CD4-positive, alpha-beta memory T cell (primary cell): ENCODE measurements at regions of chr15 and their contacts with region 1.

Region 1: GRCh38 chr15:98658831-98659699 is 10.7 kb downstream of the IGF1R start:
- DNase-seq: peak in 4 of 5 donors; percentile 27 to 40 (median 35)
- H3K4me3 ChIP-seq: no peak overlapping the region
- H3K4me3 Mint-ChIP-seq: no peak overlapping the region
- H3K27ac ChIP-seq: no peak overlapping the region
- H3K27ac Mint-ChIP-seq: no peak overlapping the region
- H3K4me1 ChIP-seq: peaks cover 3% of the 10 kb centered on the region
- H3K4me1 Mint-ChIP-seq: peaks cover 0 to 18% (median 10%) of the 10 kb centered on the region in 4 donors
- H3K27me3 ChIP-seq: no peaks in the 10 kb centered on the region
- H3K27me3 Mint-ChIP-seq: peaks cover 15 to 16% of the 10 kb centered on the region in 2 donors

Region 2: DNA sequence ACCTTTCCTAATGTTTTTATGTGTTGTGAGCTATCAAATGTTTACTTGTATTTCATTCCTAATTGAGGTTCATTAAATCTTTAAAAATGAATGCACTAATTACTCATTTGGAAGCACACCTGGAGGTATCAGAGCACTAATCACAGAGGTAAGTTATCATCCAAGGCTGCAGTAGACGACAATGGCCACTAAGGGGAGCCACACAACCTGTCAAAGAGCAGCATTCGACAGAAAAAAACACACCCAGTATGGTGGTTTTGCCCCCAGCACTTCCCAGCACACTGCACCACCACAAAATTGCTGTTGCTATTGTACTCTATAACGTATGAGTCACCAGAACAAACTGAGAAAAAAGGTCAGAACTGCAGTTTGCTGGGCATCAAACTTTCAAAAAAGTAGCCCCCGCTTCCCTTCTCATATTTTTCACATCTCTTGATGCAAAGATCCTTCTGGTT is 216.7 kb before region 1 on chr15:
- CTCF ChIA-PET with region 1: interaction called, 3 read pairs
- POLR2A ChIA-PET with region 1: no interaction called
- intact Hi-C with region 1: loop called (anchors 1 kb)
- DNase-seq: peak; percentile 12 to 43 (median 24)
- H3K4me3 ChIP-seq: no peak overlapping the region
- H3K4me3 Mint-ChIP-seq: no peak overlapping the region
- H3K27ac ChIP-seq: no peak overlapping the region
- H3K27ac Mint-ChIP-seq: no peak overlapping the region
- H3K4me1 ChIP-seq: no peaks in the 10 kb centered on the region
- H3K4me1 Mint-ChIP-seq: no peaks in the 10 kb centered on the region
- H3K27me3 ChIP-seq: no peaks in the 10 kb centered on the region
- H3K27me3 Mint-ChIP-seq: peaks cover 6 to 8% of the 10 kb centered on the region in 2 donors

Region 3: GRCh38 chr15:98518823-98519561 is 140.1 kb before region 1 on chr15:
- CTCF ChIA-PET with region 1: interaction called, 145 read pairs
- POLR2A ChIA-PET with region 1: interaction called, 3 read pairs
- intact Hi-C with region 1: loop called (anchors 1 kb)
- DNase-seq: peak in 4 of 5 donors; percentile 38 to 50 (median 42)
- H3K4me3 ChIP-seq: no peak overlapping the region
- H3K4me3 Mint-ChIP-seq: no peak overlapping the region
- H3K27ac ChIP-seq: no peak overlapping the region
- H3K27ac Mint-ChIP-seq: peak overlapping the region in 1 of 7 donors; percentile 23
- H3K4me1 ChIP-seq: no peaks in the 10 kb centered on the region
- H3K4me1 Mint-ChIP-seq: peaks cover 0 to 4% (median 0%) of the 10 kb centered on the region in 4 donors
- H3K27me3 ChIP-seq: no peaks in the 10 kb centered on the region
- H3K27me3 Mint-ChIP-seq: peaks cover 0 to 4% of the 10 kb centered on the region in 2 donors

Region 4: DNA sequence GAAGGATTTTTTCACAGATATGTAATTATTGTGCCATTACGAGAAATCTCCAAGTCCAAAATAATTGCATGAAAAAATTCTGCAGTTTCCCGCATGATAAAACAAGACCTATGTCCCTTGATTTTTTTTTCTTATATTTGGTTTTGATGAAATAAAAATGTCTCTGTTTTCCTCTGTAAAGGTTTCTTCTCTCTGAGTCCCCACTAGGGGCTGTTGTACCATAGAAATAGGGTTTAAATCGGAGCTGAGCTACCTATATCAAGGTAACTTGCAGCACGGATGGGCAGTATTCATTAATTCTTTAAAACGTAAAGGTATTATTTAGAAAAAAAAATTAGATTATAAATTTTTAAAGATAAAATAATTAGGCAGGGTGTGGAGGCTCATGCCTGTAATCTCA is 77.3 kb before region 1 on chr15:
- CTCF ChIA-PET with region 1: interaction called, 6 read pairs
- POLR2A ChIA-PET with region 1: no interaction called
- intact Hi-C with region 1: loop called (anchors 2 kb)
- DNase-seq: peak in 1 of 5 donors; percentile 6
- H3K4me3 ChIP-seq: no peak overlapping the region
- H3K4me3 Mint-ChIP-seq: no peak overlapping the region
- H3K27ac ChIP-seq: no peak overlapping the region
- H3K27ac Mint-ChIP-seq: no peak overlapping the region
- H3K4me1 ChIP-seq: no peaks in the 10 kb centered on the region
- H3K4me1 Mint-ChIP-seq: peaks cover 4 to 5% (median 4%) of the 10 kb centered on the region in 4 donors
- H3K27me3 ChIP-seq: peaks cover 3% of the 10 kb centered on the region
- H3K27me3 Mint-ChIP-seq: peaks cover 16 to 17% of the 10 kb centered on the region in 2 donors